ENCODE measurements at regions of chr17 and their contacts with region 1.

Region 1: GRCh38 chr17:44932496-44933097 is 15.0 kb downstream of the KIF18B start:
- DNase-seq: no peak
- H3K4me3 Mint-ChIP-seq: no peak overlapping the region
- H3K27ac Mint-ChIP-seq: no peak overlapping the region
- H3K4me1 Mint-ChIP-seq: no peaks in the 10 kb centered on the region
- H3K27me3 Mint-ChIP-seq: no peaks in the 10 kb centered on the region

Region 2: GRCh38 chr17:44919885-44920564 is 12.6 kb before region 1 on chr17:
- CTCF ChIA-PET with region 1: interaction called, 11 read pairs
- POLR2A ChIA-PET with region 1: interaction called, 3 read pairs
- intact Hi-C with region 1: no loop called
- DNase-seq: peak; percentile 85
- H3K4me3 Mint-ChIP-seq: no peak overlapping the region
- H3K27ac Mint-ChIP-seq: no peak overlapping the region
- H3K4me1 Mint-ChIP-seq: peaks cover 5% of the 10 kb centered on the region
- H3K27me3 Mint-ChIP-seq: peaks cover 10% of the 10 kb centered on the region